Heart left ventricle (tissue), 16 donors: ENCODE measurements at regions of chr15 and their contacts with region 1.

Region 1: DNA sequence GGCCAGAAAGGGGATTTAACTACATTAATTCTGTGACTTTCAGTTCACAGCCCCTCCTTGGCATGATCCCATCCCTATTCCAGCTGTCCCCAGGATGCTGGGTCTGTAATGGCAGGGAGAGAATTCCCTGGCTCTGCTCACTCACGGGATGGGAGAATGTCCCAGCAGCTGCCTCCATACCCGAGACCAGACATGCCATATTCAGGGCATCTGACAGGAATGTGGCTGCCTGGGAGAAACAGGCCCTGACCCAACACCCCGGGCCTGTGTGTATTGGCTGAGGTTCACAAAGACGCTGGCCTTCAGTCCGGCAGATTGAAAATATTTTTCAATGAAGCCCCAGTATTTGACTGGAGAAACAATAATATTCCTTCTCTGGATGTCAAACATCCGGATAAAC is 83.6 kb upstream of the SMAD3 start:
- DNase-seq: no peak
- ATAC-seq: no peak
- H3K4me3 ChIP-seq: no peak overlapping the region
- H3K27ac ChIP-seq: no peak overlapping the region
- H3K4me1 ChIP-seq: peaks cover 0 to 2% (median 0%) of the 10 kb centered on the region in 12 donors
- H3K27me3 ChIP-seq: no peaks in the 10 kb centered on the region
- CTCF ChIP-seq: no peak
- POLR2A ChIP-seq: no peak

Region 2: GRCh38 chr15:67048281-67049279 is 66.8 kb after region 1 on chr15:
- intact Hi-C with region 1: loop called in 1 of 10 experiments (anchors 10 kb)
- DNase-seq: peak in 2 of 5 donors; percentile 30 to 40
- ATAC-seq: peak; percentile 31 to 56 (median 48)
- H3K4me3 ChIP-seq: no peak overlapping the region
- H3K27ac ChIP-seq: peak overlapping the region in 4 of 12 donors; percentile 10 to 38 (median 24)
- H3K4me1 ChIP-seq: peaks cover 0 to 48% (median 25%) of the 10 kb centered on the region in 12 donors
- H3K27me3 ChIP-seq: no peaks in the 10 kb centered on the region
- CTCF ChIP-seq: no peak
- POLR2A ChIP-seq: no peak